HEK293T (cell line): ENCODE measurements at regions of chr11 and their contacts with region 1.

Region 1: DNA sequence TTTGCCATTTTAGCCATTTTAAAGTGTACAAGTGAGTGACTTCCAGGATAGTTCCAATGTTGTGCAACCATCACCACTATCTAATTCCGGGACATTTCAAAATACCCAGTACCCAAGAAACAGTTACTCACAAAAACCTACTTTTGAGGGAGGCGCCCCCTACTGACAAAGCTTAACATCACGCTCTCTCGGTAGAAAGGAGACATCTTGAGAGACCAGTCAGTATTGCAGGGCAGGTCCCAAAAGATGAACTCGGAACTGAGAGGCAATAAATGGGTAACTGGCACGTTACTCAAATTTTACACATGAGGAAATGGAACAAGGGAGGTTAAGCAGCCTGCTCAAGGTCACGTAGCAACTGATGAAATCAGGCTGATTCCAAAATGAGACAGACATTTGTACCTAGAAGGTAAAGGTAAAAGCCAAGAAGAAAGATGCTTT is 50.0 kb upstream of the POU2AF1 start:
- DNase-seq: peak; percentile 50

Region 2: GRCh38 chr11:111231836-111232235 is 197.2 kb before region 1 on chr11:
- CTCF ChIA-PET with region 1: no interaction called
- POLR2A ChIA-PET with region 1: no interaction called
- DNase-seq: no peak

Region 3: GRCh38 chr11:111446404-111447111 is 17.5 kb after region 1 on chr11:
- CTCF ChIA-PET with region 1: interaction called, 21 read pairs
- POLR2A ChIA-PET with region 1: no interaction called
- DNase-seq: peak; percentile 92